MCF 10A (cell line): ENCODE measurements at regions of chr10 and their contacts with region 1.

Region 1: GRCh38 chr10:24383681-24384106 is 174.8 kb downstream of the KIAA1217 start:
- DNase-seq: peak; percentile 98
- H3K4me3 Mint-ChIP-seq: peak overlapping the region; percentile 63
- H3K27ac Mint-ChIP-seq: peak overlapping the region; percentile 65
- H3K4me1 Mint-ChIP-seq: peaks cover 25% of the 10 kb centered on the region
- H3K27me3 Mint-ChIP-seq: no peaks in the 10 kb centered on the region
- CTCF ChIP-seq: peak; percentile 55

Region 2: GRCh38 chr10:24223953-24224352 is 159.7 kb before region 1 on chr10:
- CTCF ChIA-PET with region 1: no interaction called
- POLR2A ChIA-PET with region 1: no interaction called
- intact Hi-C with region 1: no loop called
- DNase-seq: no peak
- H3K4me3 Mint-ChIP-seq: no peak overlapping the region
- H3K27ac Mint-ChIP-seq: no peak overlapping the region
- H3K4me1 Mint-ChIP-seq: no peaks in the 10 kb centered on the region
- H3K27me3 Mint-ChIP-seq: no peaks in the 10 kb centered on the region
- CTCF ChIP-seq: no peak

Region 3: GRCh38 chr10:24249829-24250415 is 133.8 kb before region 1 on chr10:
- CTCF ChIA-PET with region 1: interaction called, 4 read pairs
- POLR2A ChIA-PET with region 1: interaction called, 19 read pairs
- intact Hi-C with region 1: no loop called
- DNase-seq: peak; percentile 90
- H3K4me3 Mint-ChIP-seq: peak overlapping the region; percentile 28
- H3K27ac Mint-ChIP-seq: peak overlapping the region; percentile 91
- H3K4me1 Mint-ChIP-seq: peaks cover 32% of the 10 kb centered on the region
- H3K27me3 Mint-ChIP-seq: no peaks in the 10 kb centered on the region
- CTCF ChIP-seq: no peak

Region 4: DNA sequence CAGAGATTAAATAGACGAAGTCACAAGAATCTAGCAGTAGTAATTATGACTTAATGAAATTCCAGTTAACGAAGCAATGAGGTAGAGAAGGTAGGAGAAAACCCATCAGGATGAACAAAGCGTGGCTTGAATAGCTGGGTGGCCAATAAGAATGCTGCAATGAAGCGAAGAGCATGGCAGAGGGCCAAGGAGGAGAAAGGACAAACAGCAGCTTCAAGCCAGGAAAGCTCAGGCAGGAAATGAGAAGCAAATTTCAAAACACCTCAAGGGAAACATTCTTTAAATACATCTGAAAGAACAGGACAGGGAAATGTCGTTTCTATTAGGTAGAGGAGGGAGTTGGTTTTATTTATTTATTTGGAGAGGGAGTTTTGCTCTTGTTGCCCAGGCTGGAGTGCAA is 52.2 kb before region 1 on chr10:
- CTCF ChIA-PET with region 1: no interaction called
- POLR2A ChIA-PET with region 1: interaction called, 10 read pairs
- intact Hi-C with region 1: no loop called
- DNase-seq: peak; percentile 93
- H3K4me3 Mint-ChIP-seq: peak overlapping the region; percentile 22
- H3K27ac Mint-ChIP-seq: peak overlapping the region; percentile 77
- H3K4me1 Mint-ChIP-seq: peaks cover 29% of the 10 kb centered on the region
- H3K27me3 Mint-ChIP-seq: no peaks in the 10 kb centered on the region
- CTCF ChIP-seq: no peak

Region 5: GRCh38 chr10:24415455-24416125 is 31.9 kb after region 1 on chr10:
- CTCF ChIA-PET with region 1: interaction called, 17 read pairs
- POLR2A ChIA-PET with region 1: interaction called, 16 read pairs
- intact Hi-C with region 1: no loop called
- DNase-seq: peak; percentile 67
- H3K4me3 Mint-ChIP-seq: peak overlapping the region; percentile 25
- H3K27ac Mint-ChIP-seq: peak overlapping the region; percentile 96
- H3K4me1 Mint-ChIP-seq: peaks cover 23% of the 10 kb centered on the region
- H3K27me3 Mint-ChIP-seq: no peaks in the 10 kb centered on the region
- CTCF ChIP-seq: no peak

Region 6: GRCh38 chr10:24456322-24456721 is 72.6 kb after region 1 on chr10:
- CTCF ChIA-PET with region 1: interaction called, 4 read pairs
- POLR2A ChIA-PET with region 1: interaction called, 15 read pairs
- intact Hi-C with region 1: no loop called
- DNase-seq: peak; percentile 72
- H3K4me3 Mint-ChIP-seq: peak overlapping the region; percentile 44
- H3K27ac Mint-ChIP-seq: peak overlapping the region; percentile 73
- H3K4me1 Mint-ChIP-seq: peaks cover 23% of the 10 kb centered on the region
- H3K27me3 Mint-ChIP-seq: no peaks in the 10 kb centered on the region
- CTCF ChIP-seq: no peak

Region 7: GRCh38 chr10:24503461-24504320 is 120.0 kb after region 1 on chr10:
- CTCF ChIA-PET with region 1: interaction called, 27 read pairs
- POLR2A ChIA-PET with region 1: interaction called, 6 read pairs
- intact Hi-C with region 1: loop called (anchors 1 kb)
- DNase-seq: peak; percentile 81
- H3K4me3 Mint-ChIP-seq: no peak overlapping the region
- H3K27ac Mint-ChIP-seq: peak overlapping the region; percentile 23
- H3K4me1 Mint-ChIP-seq: no peaks in the 10 kb centered on the region
- H3K27me3 Mint-ChIP-seq: no peaks in the 10 kb centered on the region
- CTCF ChIP-seq: peak; percentile 86